ENCODE measurements at regions of chr6 and their contacts with region 1.

Region 1: DNA sequence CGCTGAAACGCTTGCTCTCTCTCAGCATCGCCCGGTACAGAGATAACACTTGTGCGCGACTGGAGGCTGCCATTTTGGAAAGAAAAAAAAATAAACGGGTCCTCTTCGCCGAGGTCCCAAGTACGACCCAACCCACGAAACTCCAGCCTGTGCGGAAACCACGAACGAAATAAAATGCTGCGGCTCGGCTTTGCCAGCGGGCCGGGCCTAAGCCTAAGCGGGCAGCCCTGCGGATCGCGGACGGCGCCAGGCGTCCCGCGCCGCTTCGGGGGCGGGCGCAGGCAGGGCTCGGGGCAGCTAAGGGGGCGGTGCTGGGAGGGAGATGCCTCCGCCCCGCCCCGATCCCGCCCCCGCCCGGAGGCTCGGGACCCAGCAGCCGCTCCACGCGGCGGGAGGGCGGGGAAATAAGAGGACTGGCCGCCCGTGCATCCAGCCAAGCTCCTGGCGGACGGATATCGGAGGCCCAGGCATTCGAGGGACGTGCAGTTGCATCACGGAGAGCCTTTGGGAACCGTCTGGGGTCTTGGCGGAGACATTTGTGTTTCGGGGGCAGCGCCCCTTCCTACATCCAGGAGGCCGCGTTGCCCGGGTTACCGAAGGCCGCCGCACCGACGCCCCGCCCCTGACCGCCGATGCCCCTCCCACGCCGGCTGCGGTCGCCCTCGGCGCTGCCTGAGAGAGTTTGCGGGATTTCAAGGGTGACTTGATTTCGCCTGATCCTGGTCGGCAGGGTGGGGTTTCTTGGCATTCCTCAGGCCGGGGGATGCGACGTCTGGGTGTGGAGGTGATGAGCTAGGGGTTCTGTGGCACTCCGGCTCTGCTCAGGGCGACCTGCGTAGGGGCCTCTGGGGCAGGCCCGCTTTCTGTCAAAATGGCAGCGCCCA is at the starts of genes FARS2 and LYRM4:
- DNase-seq: peak; percentile 55 to 94
- H3K4me3 ChIP-seq: peak within 1 kb of the TSS; percentile 82
- H3K27ac ChIP-seq: peak within 1 kb of the TSS; percentile 88
- H3K4me1 ChIP-seq: peaks cover 18% of the 10 kb centered on the region; the same call in 1 of the 2 replicates
- H3K27me3 ChIP-seq: no peaks in the 10 kb centered on the region
- CTCF ChIP-seq: no peak
- total RNA-seq, gene FARS2: 25.1 and 26.7 TPM in 2 replicates
- total RNA-seq, gene LYRM4: 30.6 and 37.0 TPM in 2 replicates

Region 2: GRCh38 chr6:5159148-5159547 is 101.8 kb before region 1 on chr6:
- CTCF ChIA-PET with region 1: no interaction called
- POLR2A ChIA-PET with region 1: no interaction called
- intact Hi-C with region 1: loop called (anchors 5 kb)
- DNase-seq: peak; percentile 63 to 76
- H3K4me3 ChIP-seq: no peak overlapping the region
- H3K27ac ChIP-seq: 0 out of 2 replicates have a peak overlapping the region, but pooled peaks have one; percentile 23
- H3K4me1 ChIP-seq: peaks cover 20% of the 10 kb centered on the region
- H3K27me3 ChIP-seq: no peaks in the 10 kb centered on the region
- CTCF ChIP-seq: no peak

Region 3: GRCh38 chr6:5205877-5206850 is 54.7 kb before region 1 on chr6:
- CTCF ChIA-PET with region 1: no interaction called
- POLR2A ChIA-PET with region 1: no interaction called
- intact Hi-C with region 1: no loop called
- DNase-seq: no peak
- H3K4me3 ChIP-seq: no peak overlapping the region
- H3K27ac ChIP-seq: no peak overlapping the region
- H3K4me1 ChIP-seq: 0 out of 2 replicates have a peak, but pooled peaks cover 7% of the 10 kb centered on the region
- H3K27me3 ChIP-seq: no peaks in the 10 kb centered on the region
- CTCF ChIP-seq: no peak

Region 4: DNA sequence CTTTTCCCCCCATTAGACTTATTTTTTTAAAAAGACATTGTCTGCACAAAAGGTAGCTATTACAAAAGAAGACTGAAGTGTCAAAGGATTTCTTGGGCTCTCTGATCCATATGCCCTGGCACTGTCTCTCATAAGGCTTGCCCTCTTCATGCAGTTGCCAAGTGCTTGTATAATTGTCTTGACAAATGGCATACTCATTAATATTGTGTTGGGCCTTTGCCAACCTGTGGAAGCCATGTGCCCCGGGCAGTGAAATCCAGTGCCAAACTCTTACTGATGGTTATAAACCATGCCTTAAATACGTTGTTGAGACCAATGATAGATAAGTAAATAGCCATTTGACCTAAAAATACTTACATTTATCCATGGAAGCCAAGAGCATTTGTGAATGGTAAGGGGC is 98.5 kb after region 1 on chr6:
- CTCF ChIA-PET with region 1: no interaction called
- POLR2A ChIA-PET with region 1: no interaction called
- intact Hi-C with region 1: no loop called
- DNase-seq: no peak
- H3K4me3 ChIP-seq: no peak overlapping the region
- H3K27ac ChIP-seq: no peak overlapping the region
- H3K4me1 ChIP-seq: no peaks in the 10 kb centered on the region
- H3K27me3 ChIP-seq: no peaks in the 10 kb centered on the region
- CTCF ChIP-seq: no peak

Region 5: GRCh38 chr6:5457041-5457440 is 196.1 kb after region 1 on chr6:
- CTCF ChIA-PET with region 1: no interaction called
- POLR2A ChIA-PET with region 1: no interaction called
- intact Hi-C with region 1: loop called (anchors 5 kb)
- DNase-seq: peak; percentile 70 to 83
- H3K4me3 ChIP-seq: no peak overlapping the region
- H3K27ac ChIP-seq: peak overlapping the region; percentile 56
- H3K4me1 ChIP-seq: peaks cover 27% of the 10 kb centered on the region
- H3K27me3 ChIP-seq: no peaks in the 10 kb centered on the region
- CTCF ChIP-seq: no peak

Region 6: GRCh38 chr6:5562277-5562676 is 301.4 kb after region 1 on chr6:
- CTCF ChIA-PET with region 1: no interaction called
- POLR2A ChIA-PET with region 1: no interaction called
- intact Hi-C with region 1: loop called (anchors 5 kb)
- DNase-seq: no peak
- H3K4me3 ChIP-seq: no peak overlapping the region
- H3K27ac ChIP-seq: no peak overlapping the region
- H3K4me1 ChIP-seq: 0 out of 2 replicates have a peak, but pooled peaks cover 7% of the 10 kb centered on the region
- H3K27me3 ChIP-seq: no peaks in the 10 kb centered on the region
- CTCF ChIP-seq: no peak